ENCODE measurements at regions of chr15 and their contacts with region 1.

Region 1: GRCh38 chr15:41501931-41502794 is 8.5 kb downstream of the ITPKA start:
- DNase-seq: no peak
- H3K4me3 Mint-ChIP-seq: peak overlapping the region; percentile 46
- H3K27ac Mint-ChIP-seq: no peak overlapping the region
- H3K4me1 Mint-ChIP-seq: peaks cover 17% of the 10 kb centered on the region
- H3K27me3 Mint-ChIP-seq: peaks cover 63% of the 10 kb centered on the region

Region 2: GRCh38 chr15:41387646-41388045 is 114.5 kb before region 1 on chr15:
- intact Hi-C with region 1: no loop called
- DNase-seq: no peak
- H3K4me3 Mint-ChIP-seq: no peak overlapping the region
- H3K27ac Mint-ChIP-seq: no peak overlapping the region
- H3K4me1 Mint-ChIP-seq: no peaks in the 10 kb centered on the region
- H3K27me3 Mint-ChIP-seq: no peaks in the 10 kb centered on the region

Region 3: DNA sequence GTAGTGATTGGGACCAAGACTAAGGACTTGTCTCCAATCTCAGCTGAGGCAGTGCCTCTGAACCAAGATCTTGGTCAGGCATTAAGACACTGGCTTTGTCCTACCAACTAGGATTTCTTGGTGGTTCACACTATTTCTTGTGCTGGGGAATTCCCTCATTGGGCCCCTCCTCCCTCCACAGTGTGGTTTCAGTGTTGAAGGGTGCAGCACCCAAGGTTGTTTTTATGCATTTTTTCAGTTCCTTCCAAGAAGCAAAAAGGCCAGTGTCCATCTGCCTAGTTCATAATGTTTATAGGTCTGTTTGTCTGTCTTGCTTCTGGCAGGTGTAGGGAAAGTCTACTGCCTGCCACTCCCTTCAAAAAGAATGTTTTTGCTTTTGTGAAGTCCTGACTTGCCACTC is 19.0 kb before region 1 on chr15:
- intact Hi-C with region 1: loop called (anchors 2 kb)
- DNase-seq: peak; percentile 54
- H3K4me3 Mint-ChIP-seq: peak overlapping the region; percentile 30
- H3K27ac Mint-ChIP-seq: peak overlapping the region; percentile 48
- H3K4me1 Mint-ChIP-seq: peaks cover 58% of the 10 kb centered on the region
- H3K27me3 Mint-ChIP-seq: peaks cover 2% of the 10 kb centered on the region

Measured in activated T-helper 1 cell treated with anti-CD3 and anti-CD28 coated beads, Interleukin-12 subunit alpha, Interleukin-12 subunit beta, Interleukin-2, Interleukin-4 antibody, amounts not matched to agents 30 ng/mL and 10 ng/mL and 1 ng/mL, durations not matched to agents 14 hours and 24 hours and 36 hours (primary cell).